Prostate gland (tissue), 2 donors: ENCODE measurements at regions of chr13 and their contacts with region 1.

Region 1: DNA sequence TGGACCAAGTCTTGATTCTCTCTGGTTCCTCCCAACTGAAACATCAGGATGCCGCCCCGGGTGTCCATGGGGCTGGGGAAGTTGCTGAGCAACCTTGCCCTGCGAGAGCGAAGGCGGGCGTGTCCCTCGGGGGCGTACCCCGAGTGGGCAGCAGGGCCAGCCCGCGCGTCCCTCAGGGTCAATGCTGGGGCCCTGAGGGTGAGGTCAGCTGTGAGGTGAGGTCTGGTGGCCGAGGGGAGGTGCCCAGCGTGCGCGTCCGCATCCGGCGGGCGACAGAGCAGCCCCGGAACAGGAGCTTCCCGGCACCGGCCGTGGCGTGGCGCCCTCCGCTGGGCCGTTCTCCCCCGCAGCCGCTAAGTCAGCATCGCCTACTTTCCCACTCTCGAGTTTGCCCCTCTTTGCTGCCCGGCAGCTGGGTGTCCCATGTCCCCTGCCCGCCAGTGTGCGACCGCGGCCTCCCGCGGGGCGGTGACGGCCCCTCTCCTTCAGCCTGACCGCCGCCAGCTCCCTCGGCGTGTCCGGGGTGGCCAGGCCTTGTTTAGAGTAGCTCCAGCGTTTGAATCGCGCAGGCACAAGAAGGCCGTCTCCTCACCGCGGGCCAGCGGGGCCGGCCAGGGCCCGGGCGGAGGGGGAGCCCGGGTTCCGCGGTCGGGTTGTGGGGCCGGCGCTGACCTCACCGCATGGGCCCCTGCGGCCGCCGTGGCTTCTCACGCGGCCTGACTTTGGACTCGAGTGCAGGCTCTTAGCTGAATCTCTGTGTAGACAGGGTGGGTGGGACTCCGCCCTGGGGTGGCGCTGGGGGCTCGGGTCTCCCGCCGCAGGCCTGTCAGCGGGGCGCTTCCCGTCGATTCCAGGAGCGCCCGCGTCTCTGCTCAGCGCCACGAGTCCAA is 33.0 kb downstream of the GJA3 start:
- DNase-seq: peak; percentile 37
- H3K4me3 ChIP-seq: peak overlapping the region; percentile 39 to 51
- H3K27ac ChIP-seq: peak overlapping the region; percentile 84
- H3K4me1 ChIP-seq: no peaks in the 10 kb centered on the region
- H3K27me3 ChIP-seq: no peaks in the 10 kb centered on the region
- CTCF ChIP-seq: peak in 3 of 4 experiments; percentile 27 to 52 (median 42)
- POLR2A ChIP-seq: peak; percentile 24

Region 2: GRCh38 chr13:19981685-19982238 is 146.1 kb before region 1 on chr13:
- intact Hi-C with region 1: no loop called
- DNase-seq: no peak
- H3K4me3 ChIP-seq: no peak overlapping the region
- H3K27ac ChIP-seq: no peak overlapping the region
- H3K4me1 ChIP-seq: no peaks in the 10 kb centered on the region
- H3K27me3 ChIP-seq: no peaks in the 10 kb centered on the region
- CTCF ChIP-seq: no peak
- POLR2A ChIP-seq: no peak

Region 3: DNA sequence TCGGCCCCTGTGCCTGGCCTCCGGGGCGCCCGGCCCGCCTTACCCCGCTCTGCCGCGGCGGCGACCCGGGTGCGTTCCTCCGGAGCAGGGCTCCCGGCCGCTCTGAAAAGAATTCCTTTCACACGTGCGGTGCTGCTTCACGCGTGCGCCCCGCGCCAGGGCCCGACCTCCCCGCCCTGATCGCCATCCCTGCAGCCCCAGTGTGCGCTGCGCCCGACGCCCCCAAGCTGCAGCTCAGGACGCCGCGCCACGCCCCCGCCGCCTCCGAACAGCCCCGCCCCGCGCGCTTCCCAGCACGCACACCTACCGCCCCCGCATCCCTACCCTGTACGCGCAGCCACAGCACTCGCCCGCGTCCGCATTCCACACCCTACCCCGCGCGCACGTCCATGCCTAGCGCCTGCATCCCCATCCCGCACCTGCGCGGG is 33.0 kb after region 1 on chr13 and contains the start of gene GJA3:
- intact Hi-C with region 1: loop called (anchors 5 kb)
- DNase-seq: no peak
- H3K4me3 ChIP-seq: peak within 1 kb of the TSS; percentile 11 to 33
- H3K27ac ChIP-seq: no peak within 1 kb of the TSS
- H3K4me1 ChIP-seq: no peaks in the 10 kb centered on the region
- H3K27me3 ChIP-seq: peaks cover 10% of the 10 kb centered on the region
- CTCF ChIP-seq: no peak
- POLR2A ChIP-seq: no peak
- total RNA-seq, gene GJA3: 0.59 to 5.2 TPM

Region 4: GRCh38 chr13:20219577-20219976 is 91.8 kb after region 1 on chr13:
- intact Hi-C with region 1: no loop called
- DNase-seq: no peak
- H3K4me3 ChIP-seq: no peak overlapping the region
- H3K27ac ChIP-seq: no peak overlapping the region
- H3K4me1 ChIP-seq: no peaks in the 10 kb centered on the region
- H3K27me3 ChIP-seq: no peaks in the 10 kb centered on the region
- CTCF ChIP-seq: no peak
- POLR2A ChIP-seq: no peak

Region 5: GRCh38 chr13:21060987-21061763 is 933.4 kb after region 1 on chr13 and contains the start of gene LATS2:
- intact Hi-C with region 1: loop called (anchors 10 kb)
- DNase-seq: peak; percentile 97
- H3K4me3 ChIP-seq: peak within 1 kb of the TSS; percentile 88 to 99
- H3K27ac ChIP-seq: peak within 1 kb of the TSS; percentile 99 to 100
- H3K4me1 ChIP-seq: no peaks in the 10 kb centered on the region
- H3K27me3 ChIP-seq: no peaks in the 10 kb centered on the region
- CTCF ChIP-seq: peak in 3 of 4 experiments; percentile 65 to 78 (median 74)
- POLR2A ChIP-seq: peak; percentile 92
- total RNA-seq, gene LATS2: 22.0 to 27.4 TPM